Sciatic nerve (tissue), 2 donors: ENCODE measurements at regions of chr1 and their contacts with region 1.

Region 1: DNA sequence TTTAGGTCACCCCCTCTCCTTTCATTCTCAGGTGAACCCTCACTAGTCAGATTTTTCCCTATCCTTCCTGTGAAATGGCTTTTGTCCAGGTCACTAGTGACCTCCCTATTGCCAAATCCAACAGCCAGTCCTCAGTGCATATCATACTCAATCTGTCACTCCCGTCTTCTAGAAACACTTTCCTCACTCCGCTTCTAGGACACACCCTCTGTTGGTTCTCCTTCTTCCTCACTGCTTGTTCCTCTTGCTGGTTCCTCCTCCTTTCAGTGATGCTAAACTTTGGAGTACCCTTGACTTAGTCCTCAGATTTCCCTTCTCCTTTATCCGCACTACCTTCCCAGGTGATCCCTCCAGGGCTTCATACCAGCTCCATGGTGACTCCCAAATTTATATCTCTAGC is 94.3 kb downstream of the RNF220 start:
- DNase-seq: no peak
- ATAC-seq: no peak

Region 2: DNA sequence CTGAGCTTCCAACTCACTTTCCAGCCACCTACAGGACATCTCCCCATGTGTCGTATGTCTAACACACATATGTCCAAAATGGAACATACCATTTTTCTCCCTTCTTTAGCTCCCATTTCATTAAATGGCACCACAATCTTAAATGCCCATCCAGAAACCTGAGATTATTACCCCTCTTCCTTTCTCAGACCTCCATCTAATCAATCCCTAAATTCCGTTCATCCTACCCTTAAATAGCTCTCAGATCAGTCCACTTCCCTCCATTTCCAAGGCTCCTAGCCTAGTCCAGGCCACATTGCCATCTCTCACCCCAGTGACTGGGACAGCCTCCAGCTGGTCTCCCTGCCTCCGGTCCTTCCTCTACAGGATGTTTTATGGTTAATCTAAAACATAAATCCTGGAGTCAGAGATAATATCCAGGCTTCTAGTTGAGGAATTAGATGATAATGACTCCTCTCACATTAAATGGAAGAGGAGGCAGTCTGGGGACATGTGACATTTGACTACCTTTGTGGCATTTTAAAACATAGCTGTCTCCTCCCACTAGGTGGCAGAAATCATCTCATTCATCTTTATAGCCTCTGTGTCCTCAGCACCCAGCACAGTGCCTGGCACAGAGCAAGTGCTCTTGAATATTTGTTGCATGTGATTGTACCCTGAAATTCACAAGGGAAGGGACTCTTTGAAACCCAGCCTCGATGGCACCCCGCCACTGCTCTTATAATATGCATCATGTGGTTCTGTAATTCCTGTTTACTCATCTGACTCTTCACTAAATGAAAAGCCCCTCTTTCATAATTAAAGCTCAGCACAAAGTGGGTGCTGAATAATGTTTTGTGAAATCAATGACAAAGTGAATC is 72.6 kb after region 1 on chr1:
- intact Hi-C with region 1: loop called (anchors 2 kb)
- DNase-seq: no peak
- ATAC-seq: no peak